ENCODE measurements at regions of chr14 and their contacts with region 1.

Region 1: DNA sequence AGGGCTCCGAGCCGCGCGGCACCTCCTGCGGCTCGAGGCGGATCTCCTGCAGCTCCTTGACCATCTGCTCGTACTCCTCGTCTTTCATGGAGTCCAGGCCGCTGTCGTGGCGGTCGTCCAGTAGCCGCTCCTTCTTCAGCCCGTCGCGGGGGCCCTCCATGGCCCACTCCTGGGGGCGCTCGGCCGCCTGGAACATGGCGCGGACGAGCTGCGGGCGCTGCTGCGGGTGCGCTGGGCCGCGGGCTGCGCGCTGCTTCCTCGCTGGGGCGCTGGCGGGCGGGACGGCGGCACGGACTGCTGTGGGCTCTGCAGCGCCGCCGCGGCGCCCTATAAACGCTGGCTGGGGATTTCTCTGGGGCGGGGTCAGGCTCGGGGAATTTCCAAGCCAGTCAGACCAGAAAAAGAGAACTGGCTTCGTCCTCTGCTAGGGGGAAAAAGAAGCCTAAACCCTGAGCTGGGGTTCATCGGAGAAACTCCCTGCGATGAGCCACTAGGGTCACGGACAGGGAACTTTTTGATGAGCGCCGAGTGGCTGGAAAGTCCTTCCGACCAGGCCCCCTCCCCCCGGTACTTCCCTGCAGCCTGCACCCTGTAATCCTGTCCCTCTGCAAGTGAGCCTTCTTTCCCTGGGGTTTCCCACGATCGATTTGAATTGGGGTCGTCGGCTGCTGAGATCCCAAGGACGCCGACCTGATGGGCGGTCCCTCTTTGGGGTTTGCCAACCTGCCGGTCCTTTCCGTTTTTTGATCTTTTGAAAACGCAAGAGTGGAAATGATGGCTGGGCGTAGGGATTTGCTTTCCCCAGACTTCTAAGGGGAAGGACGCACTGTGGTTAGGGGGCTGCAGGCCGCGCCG is at the start of gene NFKBIA:
- DNase-seq: peak; percentile 93
- ATAC-seq: peak; percentile 72
- H3K4me3 Mint-ChIP-seq: peak within 1 kb of the TSS; percentile 94
- H3K27ac Mint-ChIP-seq: peak within 1 kb of the TSS; percentile 95
- H3K4me1 Mint-ChIP-seq: peaks cover 54% of the 10 kb centered on the region
- H3K27me3 Mint-ChIP-seq: no peaks in the 10 kb centered on the region
- total RNA-seq, gene NFKBIA: 82.9 to 245 TPM

Region 2: GRCh38 chr14:35121887-35122695 is 282.6 kb before region 1 on chr14 and contains the starts of genes PPP2R3C and PRORP:
- CTCF ChIA-PET with region 1: interaction called, 12 read pairs
- DNase-seq: peak; percentile 97
- ATAC-seq: peak; percentile 90
- H3K4me3 Mint-ChIP-seq: peak within 1 kb of the TSS; percentile 94
- H3K27ac Mint-ChIP-seq: peak within 1 kb of the TSS; percentile 99
- H3K4me1 Mint-ChIP-seq: peaks cover 56% of the 10 kb centered on the region
- H3K27me3 Mint-ChIP-seq: no peaks in the 10 kb centered on the region
- total RNA-seq, gene PPP2R3C: 38.9 to 47.1 TPM
- total RNA-seq, gene PRORP: 28.0 to 31.3 TPM

Region 3: DNA sequence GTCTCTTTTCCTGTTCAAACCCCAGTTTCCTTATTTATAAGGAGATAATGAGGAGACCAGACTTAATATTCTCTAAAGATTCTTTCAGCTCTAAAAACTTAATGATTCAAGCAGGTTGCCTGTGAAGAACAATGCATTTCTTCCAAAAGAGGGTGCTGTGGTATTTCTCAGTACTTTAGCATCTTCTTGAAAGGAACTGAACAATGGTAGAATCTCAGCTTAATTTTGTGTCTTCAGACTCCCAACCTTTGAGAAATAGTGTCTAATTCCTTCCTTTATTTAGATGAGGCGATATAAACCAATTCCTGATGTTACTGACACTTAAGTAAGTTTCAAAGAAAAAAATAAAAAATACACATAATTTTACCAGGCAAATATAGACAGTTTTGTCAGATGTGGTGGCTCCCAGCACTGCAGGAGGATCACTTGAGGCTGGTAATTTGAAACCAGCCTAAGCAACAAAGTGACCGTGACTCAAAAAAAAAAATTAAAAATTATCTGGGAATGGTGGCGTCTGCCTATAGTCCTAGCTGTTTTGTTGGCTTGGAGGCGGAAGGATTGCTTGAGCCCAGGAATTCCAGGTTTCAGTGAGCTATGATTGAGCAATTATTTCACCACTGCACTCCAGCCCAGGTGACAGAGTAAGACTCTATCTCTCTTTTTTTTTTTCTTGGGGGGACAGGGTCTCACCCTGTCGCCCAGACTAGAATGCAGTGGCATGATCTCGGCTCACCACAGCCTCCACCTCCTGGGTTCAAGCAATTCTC is 189.4 kb before region 1 on chr14:
- CTCF ChIA-PET with region 1: interaction called, 22 read pairs
- DNase-seq: no peak
- ATAC-seq: peak; percentile 55
- H3K4me3 Mint-ChIP-seq: no peak overlapping the region
- H3K27ac Mint-ChIP-seq: no peak overlapping the region
- H3K4me1 Mint-ChIP-seq: peaks cover 21% of the 10 kb centered on the region
- H3K27me3 Mint-ChIP-seq: no peaks in the 10 kb centered on the region

Region 4: DNA sequence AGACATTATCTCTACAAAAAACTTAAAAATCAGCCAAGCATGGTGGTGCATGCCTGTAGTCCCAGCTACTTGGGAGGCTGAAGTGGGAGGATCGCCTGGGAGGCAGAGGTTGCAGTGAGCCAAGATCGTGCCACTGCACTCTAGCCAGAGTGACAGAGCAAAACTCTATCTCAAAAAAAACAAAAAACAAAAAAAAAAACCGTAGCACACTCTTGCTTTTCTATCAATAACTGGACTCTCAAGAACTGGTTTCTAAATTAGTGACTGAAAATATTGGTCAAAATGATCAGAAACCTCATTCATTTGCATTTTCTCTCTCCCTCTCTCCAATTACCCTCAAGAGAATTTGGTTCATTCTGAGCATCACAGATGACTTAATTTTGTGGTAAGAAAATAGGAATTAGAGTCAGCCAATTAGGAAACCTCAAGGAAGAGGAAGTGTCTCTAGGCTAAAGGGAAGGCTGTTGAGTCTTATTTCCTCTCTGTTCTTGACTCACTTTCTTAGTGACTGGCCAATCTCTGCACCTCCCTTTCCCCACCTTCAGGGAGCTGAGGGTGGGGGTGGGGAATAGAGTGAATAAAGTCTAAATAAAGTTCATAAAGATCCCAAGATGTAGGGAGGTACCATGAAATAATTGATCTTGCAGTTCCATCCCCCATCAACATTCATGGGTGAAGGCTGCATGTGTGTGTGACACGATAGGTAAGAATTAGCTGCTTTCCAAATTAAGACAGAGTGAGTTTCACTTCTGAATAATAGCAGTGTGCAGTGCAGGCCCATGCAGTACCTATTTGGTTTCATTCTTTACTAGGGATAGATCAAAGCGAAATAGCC is 119.3 kb before region 1 on chr14:
- CTCF ChIA-PET with region 1: interaction called, 36 read pairs
- DNase-seq: peak; percentile 58
- ATAC-seq: peak; percentile 81
- H3K4me3 Mint-ChIP-seq: peak overlapping the region; percentile 57
- H3K27ac Mint-ChIP-seq: peak overlapping the region; percentile 94
- H3K4me1 Mint-ChIP-seq: peaks cover 40% of the 10 kb centered on the region
- H3K27me3 Mint-ChIP-seq: no peaks in the 10 kb centered on the region

Region 5: DNA sequence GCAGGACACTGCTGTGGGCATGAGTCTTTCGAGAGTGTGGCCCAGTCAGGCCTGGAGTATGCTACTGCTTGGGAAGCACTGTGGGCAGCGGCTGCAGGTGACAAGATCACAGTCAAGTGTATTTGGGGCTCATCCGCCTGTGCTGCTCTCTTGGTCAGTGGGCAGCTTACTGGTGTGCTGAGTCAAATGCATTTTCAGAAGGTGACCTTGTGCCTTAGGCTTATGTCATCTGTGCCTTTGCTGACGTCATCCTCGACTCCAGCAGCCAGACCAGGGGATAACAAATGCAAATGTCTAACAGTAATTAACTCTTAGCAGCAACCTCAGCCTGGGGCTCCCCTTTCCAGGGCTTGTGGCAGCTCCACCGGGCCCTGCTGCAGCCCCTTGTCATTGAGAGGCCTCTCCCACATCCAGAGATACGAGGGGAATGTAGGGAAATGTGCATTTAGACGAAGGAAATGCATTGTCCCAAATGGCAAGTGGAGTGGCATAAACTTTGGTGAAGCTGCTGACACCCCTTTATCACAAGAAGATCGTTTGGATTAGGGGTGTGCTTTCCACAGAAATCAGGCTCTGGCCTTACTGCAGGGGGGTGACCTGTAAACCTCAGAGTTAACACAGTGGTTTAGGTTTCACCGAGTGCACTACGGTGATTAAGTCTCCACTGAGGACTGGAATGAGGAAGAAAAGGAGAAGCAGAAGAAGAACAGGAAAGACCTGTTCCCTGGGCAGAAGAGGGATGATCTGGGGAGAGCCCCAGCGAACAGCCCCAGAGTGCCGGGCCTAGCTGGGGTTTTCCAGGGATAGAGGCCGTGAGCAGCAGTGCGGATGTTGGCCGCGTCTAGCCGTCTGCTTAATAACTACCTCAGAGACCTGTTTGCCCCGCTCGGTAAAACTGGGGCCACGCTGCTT is 72.8 kb before region 1 on chr14:
- CTCF ChIA-PET with region 1: interaction called, 25 read pairs
- DNase-seq: no peak
- ATAC-seq: no peak
- H3K4me3 Mint-ChIP-seq: no peak overlapping the region
- H3K27ac Mint-ChIP-seq: peak overlapping the region; percentile 94
- H3K4me1 Mint-ChIP-seq: peaks cover 34% of the 10 kb centered on the region
- H3K27me3 Mint-ChIP-seq: no peaks in the 10 kb centered on the region

Region 6: GRCh38 chr14:35416108-35416750 is 11.6 kb after region 1 on chr14:
- CTCF ChIA-PET with region 1: interaction called, 75 read pairs
- DNase-seq: peak; percentile 80
- ATAC-seq: peak; percentile 45
- H3K4me3 Mint-ChIP-seq: peak overlapping the region; percentile 56
- H3K27ac Mint-ChIP-seq: peak overlapping the region; percentile 86
- H3K4me1 Mint-ChIP-seq: peaks cover 48% of the 10 kb centered on the region
- H3K27me3 Mint-ChIP-seq: peaks cover 9% of the 10 kb centered on the region